GM12878 (cell line): ENCODE measurements at regions of chr12 and their contacts with region 1.

Region 1: GRCh38 chr12:12546314-12546772 is 16.3 kb downstream of the DUSP16 start:
- DNase-seq: no peak
- ATAC-seq: peak; percentile 9; the same call in 1 of the 3 replicates
- H3K4me3 ChIP-seq: no peak overlapping the region
- H3K27ac ChIP-seq: no peak overlapping the region
- H3K4me1 ChIP-seq: peaks cover 10% of the 10 kb centered on the region; the same call in 1 of the 2 replicates
- H3K27me3 ChIP-seq: no peaks in the 10 kb centered on the region
- CTCF ChIP-seq: no peak
- EP300 ChIP-seq: no peak
- POLR2A ChIP-seq: no peak
- RAD21 ChIP-seq: no peak

Region 2: DNA sequence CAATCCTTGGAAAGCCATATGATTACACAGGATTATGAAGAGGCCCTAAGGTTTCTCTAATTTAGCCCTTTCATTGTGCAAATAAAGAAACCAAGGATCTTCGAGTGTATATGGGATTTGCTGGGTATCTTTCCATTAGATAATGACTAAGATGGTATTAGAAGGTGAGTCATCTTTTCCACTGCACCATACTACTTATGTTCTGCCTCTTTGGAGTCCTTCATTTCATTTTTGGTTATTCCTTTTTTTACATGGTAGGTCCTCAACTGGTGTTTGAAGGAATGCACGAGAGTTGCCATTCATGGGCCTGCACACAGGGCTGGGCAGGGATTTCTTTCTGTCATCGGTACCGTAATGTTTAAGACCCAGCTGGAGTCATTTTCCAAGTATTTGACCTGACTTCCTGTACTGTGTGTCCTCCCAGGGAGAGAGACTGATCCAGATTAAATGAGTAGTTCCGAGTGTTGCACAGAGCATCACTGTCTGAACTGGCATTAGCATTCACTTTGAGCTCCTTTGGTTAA is 103.7 kb before region 1 on chr12:
- CTCF ChIA-PET with region 1: no interaction called
- POLR2A ChIA-PET with region 1: no interaction called
- RAD21 ChIA-PET with region 1: no interaction called
- SMC1A ChIA-PET with region 1: no interaction called
- in situ Hi-C with region 1: no loop called
- intact Hi-C with region 1: no loop called
- DNase-seq: no peak
- ATAC-seq: no peak
- H3K4me3 ChIP-seq: no peak overlapping the region
- H3K27ac ChIP-seq: no peak overlapping the region
- H3K4me1 ChIP-seq: no peaks in the 10 kb centered on the region
- H3K27me3 ChIP-seq: no peaks in the 10 kb centered on the region
- CTCF ChIP-seq: no peak
- EP300 ChIP-seq: no peak
- POLR2A ChIP-seq: no peak
- RAD21 ChIP-seq: no peak

Region 3: DNA sequence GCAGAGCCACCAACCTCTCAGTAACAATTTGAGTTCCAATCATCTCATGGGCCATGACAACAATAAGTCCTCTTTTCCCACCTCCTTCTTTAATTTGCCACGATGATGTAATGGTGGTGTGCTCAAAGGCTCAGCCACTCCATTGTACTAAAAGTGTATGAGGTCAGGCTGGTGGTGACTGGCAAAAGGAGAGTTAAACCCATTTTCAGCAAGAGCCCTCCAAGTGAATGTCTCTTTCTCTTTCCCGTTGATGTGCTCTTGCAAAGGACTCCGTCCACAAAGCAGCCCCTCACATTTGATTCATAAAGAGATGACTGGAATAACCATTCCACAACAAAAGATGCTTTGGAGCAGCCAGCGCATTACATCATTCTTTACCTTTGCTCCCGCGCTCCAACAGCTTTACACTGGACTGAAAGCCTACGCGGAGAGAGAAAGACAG is 25.3 kb before region 1 on chr12:
- CTCF ChIA-PET with region 1: interaction called, 7 read pairs
- POLR2A ChIA-PET with region 1: interaction called, 12 read pairs
- RAD21 ChIA-PET with region 1: interaction called, 5 read pairs
- SMC1A ChIA-PET with region 1: interaction called, 29 read pairs
- in situ Hi-C with region 1: no loop called
- intact Hi-C with region 1: no loop called
- DNase-seq: no peak
- ATAC-seq: no peak
- H3K4me3 ChIP-seq: no peak overlapping the region
- H3K27ac ChIP-seq: no peak overlapping the region
- H3K4me1 ChIP-seq: no peaks in the 10 kb centered on the region
- H3K27me3 ChIP-seq: no peaks in the 10 kb centered on the region
- CTCF ChIP-seq: no peak
- EP300 ChIP-seq: no peak
- POLR2A ChIP-seq: no peak
- RAD21 ChIP-seq: no peak